WTC11 (cell line): ENCODE measurements at regions of chr10 and their contacts with region 1.

Region 1: GRCh38 chr10:104254493-104255310 is at the start of gene GSTO1:
- DNase-seq: peak; percentile 65
- ATAC-seq: peak; percentile 74
- H3K4me3 Mint-ChIP-seq: peak within 1 kb of the TSS; percentile 81
- H3K27ac Mint-ChIP-seq: peak within 1 kb of the TSS; percentile 87
- H3K4me1 Mint-ChIP-seq: peaks cover 60% of the 10 kb centered on the region
- H3K27me3 Mint-ChIP-seq: peaks cover 13% of the 10 kb centered on the region
- CTCF ChIP-seq: no peak
- total RNA-seq, gene GSTO1: 87.9 to 99.5 TPM (median 99.2 TPM) in 3 replicates

Region 2: DNA sequence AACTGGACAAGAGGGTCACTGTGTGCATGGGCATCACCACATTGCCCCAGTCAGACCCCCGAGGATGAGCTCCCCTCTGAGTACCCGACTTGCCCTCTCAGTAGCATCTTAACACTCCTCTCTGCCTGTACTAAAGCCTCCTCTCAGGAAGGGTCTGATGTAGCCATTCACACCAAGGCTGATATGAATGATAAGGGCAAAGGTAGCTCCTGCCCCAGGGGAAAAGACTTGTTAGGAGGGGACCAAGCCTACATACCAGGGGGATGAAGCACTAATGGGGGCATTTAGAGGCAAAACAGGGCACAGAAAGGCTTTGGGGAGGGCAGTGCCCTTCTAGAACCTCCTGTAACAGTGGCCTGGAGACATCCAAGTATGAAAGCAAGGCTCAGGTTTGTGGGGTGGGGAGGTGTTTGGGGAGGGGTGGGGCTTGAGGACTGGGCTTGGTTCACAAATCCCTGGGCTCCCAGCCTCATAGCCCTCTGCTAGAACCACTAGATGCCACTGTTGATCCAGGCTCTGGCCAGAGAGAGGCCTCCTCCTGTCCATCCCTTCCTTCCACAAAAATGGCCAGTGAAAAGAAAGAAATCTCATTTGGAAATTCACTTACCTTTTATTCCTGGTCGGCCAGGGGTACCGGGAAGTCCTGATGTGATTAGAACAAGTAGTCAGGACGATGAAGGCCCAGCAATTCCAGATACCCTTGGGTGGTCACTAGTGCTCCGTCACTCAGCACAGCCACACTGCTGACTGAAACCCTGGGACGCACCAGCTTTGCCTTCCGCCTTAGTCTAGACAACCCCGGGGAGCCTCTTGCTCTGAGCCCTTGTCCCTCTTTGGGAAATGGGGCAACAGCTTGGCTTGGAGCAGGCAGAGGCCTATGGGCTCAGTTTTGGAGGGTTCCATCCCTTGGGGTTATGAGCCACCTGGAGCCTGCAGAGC is 209.3 kb before region 1 on chr10:
- CTCF ChIA-PET with region 1: interaction called, 10 read pairs
- POLR2A ChIA-PET with region 1: no interaction called
- DNase-seq: peak; percentile 78
- ATAC-seq: peak; percentile 99
- H3K4me3 Mint-ChIP-seq: no peak overlapping the region
- H3K27ac Mint-ChIP-seq: no peak overlapping the region
- H3K4me1 Mint-ChIP-seq: peaks cover 6% of the 10 kb centered on the region
- H3K27me3 Mint-ChIP-seq: peaks cover 3% of the 10 kb centered on the region; the same call in 1 of the 2 replicates
- CTCF ChIP-seq: 0 out of 2 replicates have a peak, but pooled peaks have one; percentile 21